HepG2 (cell line): ENCODE measurements at regions of chr9 and their contacts with region 1.

Region 1: GRCh38 chr9:792282-793260 is 48.9 kb upstream of the DMRT1 start:
- DNase-seq: peak; percentile 76
- ATAC-seq: peak; percentile 83
- H3K4me3 ChIP-seq: peak overlapping the region in 2 of 3 experiments; percentile 8 to 50; a peak in 1 of 6 replicates
- H3K27ac ChIP-seq: no peak overlapping the region
- H3K4me1 ChIP-seq: peaks cover 17% of the 10 kb centered on the region
- H3K27me3 ChIP-seq: no peaks in the 10 kb centered on the region
- CTCF ChIP-seq: no peak
- EP300 ChIP-seq: peak; percentile 48 to 76; a peak in 2 of 4 replicates
- POLR2A ChIP-seq: no peak
- RAD21 ChIP-seq: no peak

Region 2: GRCh38 chr9:503881-504852 is 288.4 kb before region 1 on chr9:
- CTCF ChIA-PET with region 1: no interaction called
- POLR2A ChIA-PET with region 1: no interaction called
- in situ Hi-C with region 1: no loop called
- intact Hi-C with region 1: no loop called
- DNase-seq: peak; percentile 48
- ATAC-seq: peak; percentile 92
- H3K4me3 ChIP-seq: peak within 1 kb of the TSS; percentile 43 to 70 (median 55); a peak in 5 of 6 replicates
- H3K27ac ChIP-seq: no peak within 1 kb of the TSS
- H3K4me1 ChIP-seq: peaks cover 14% of the 10 kb centered on the region
- H3K27me3 ChIP-seq: peaks cover 4 to 34% of the 10 kb centered on the region in 2 experiments; a peak in 3 of 5 replicates
- CTCF ChIP-seq: peak; percentile 56
- EP300 ChIP-seq: no peak
- POLR2A ChIP-seq: no peak
- RAD21 ChIP-seq: peak; percentile 64

Region 3: DNA sequence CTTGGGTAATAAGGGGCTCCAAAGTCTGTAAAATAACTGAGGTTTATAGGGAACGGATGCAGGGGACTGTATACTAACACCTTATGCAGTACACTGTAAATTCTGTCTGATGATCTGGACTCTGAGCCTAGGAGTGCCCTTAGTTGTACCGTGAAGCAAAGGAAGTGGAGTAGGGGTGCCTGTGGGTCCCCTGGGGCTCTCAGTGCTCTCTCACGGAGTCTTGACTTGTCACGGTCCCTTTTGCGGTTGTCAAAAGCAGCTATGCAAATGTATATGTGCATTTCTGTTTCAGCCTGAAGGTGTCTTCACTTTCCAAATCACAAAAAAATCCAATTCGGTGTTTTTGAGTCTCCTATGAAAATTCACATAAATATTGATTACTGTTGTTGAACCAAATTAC is 66.7 kb after region 1 on chr9:
- CTCF ChIA-PET with region 1: no interaction called
- POLR2A ChIA-PET with region 1: no interaction called
- in situ Hi-C with region 1: no loop called
- intact Hi-C with region 1: loop called (anchors 2 kb)
- DNase-seq: no peak
- ATAC-seq: no peak
- H3K4me3 ChIP-seq: no peak overlapping the region
- H3K27ac ChIP-seq: no peak overlapping the region
- H3K4me1 ChIP-seq: no peaks in the 10 kb centered on the region
- H3K27me3 ChIP-seq: peaks cover 0 to 2% of the 10 kb centered on the region in 2 experiments; a peak in 1 of 5 replicates
- CTCF ChIP-seq: no peak
- EP300 ChIP-seq: no peak
- POLR2A ChIP-seq: no peak
- RAD21 ChIP-seq: no peak